ENCODE measurements at regions of chr19 and their contacts with region 1.

Region 1: DNA sequence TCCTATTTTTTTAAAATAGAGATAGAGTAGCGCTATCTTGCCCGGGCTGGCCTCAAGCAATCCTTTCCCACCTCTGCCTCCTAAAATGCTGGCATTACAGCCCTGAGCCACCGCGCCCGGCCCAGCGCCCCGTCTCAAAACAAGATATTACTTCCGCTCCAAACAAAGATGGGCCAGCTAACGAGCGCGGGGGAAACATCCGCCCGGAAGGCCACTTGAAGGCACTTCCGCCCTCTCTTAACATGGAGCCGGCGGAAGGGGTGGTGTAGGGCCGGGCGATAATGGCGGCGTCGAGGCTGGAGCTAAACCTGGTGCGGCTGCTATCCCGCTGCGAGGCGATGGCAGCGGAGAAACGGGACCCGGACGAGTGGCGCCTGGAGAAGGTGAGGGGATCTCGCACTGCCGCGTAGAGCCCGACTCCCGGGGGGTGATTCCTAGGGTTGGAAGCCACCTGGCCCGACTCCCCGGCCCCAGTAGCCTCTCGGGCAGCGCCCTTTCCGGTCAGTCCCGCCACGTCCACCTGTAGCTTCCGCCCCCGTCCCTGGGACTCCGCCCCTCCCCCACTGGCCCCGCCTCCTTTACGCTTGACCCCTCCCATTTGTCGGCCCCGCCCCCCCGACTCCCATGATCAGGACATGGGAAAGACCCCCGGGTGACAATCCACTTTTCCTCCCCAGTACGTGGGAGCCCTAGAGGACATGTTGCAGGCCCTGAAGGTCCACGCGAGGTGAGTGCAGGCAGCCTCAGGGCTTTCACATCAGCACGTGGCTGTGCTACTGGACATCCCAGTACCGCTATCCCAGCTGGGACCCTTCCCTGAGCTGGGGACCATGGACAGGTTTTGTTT is at the start of gene USE1:
- DNase-seq: peak; percentile 93
- ATAC-seq: peak; percentile 93
- H3K4me3 ChIP-seq: peak within 1 kb of the TSS; percentile 41 to 94 (median 80)
- H3K4me3 Mint-ChIP-seq: peak within 1 kb of the TSS; percentile 92
- H3K27ac ChIP-seq: peak within 1 kb of the TSS; percentile 91
- H3K27ac Mint-ChIP-seq: peak within 1 kb of the TSS; percentile 97
- H3K4me1 ChIP-seq: peaks cover 10 to 24% of the 10 kb centered on the region in 2 donors
- H3K4me1 Mint-ChIP-seq: peaks cover 19% of the 10 kb centered on the region
- H3K27me3 ChIP-seq: no peaks in the 10 kb centered on the region
- H3K27me3 Mint-ChIP-seq: no peaks in the 10 kb centered on the region
- CTCF ChIP-seq: no peak
- total RNA-seq, gene USE1: 39.9 and 49.5 TPM in 2 replicates

Region 2: GRCh38 chr19:17197666-17198065 is 17.7 kb before region 1 on chr19:
- CTCF ChIA-PET with region 1: no interaction called
- POLR2A ChIA-PET with region 1: no interaction called
- intact Hi-C with region 1: no loop called
- DNase-seq: no peak
- ATAC-seq: no peak
- H3K4me3 ChIP-seq: no peak overlapping the region
- H3K4me3 Mint-ChIP-seq: no peak overlapping the region
- H3K27ac ChIP-seq: no peak overlapping the region
- H3K27ac Mint-ChIP-seq: no peak overlapping the region
- H3K4me1 ChIP-seq: no peaks in the 10 kb centered on the region
- H3K4me1 Mint-ChIP-seq: no peaks in the 10 kb centered on the region
- H3K27me3 ChIP-seq: no peaks in the 10 kb centered on the region
- H3K27me3 Mint-ChIP-seq: no peaks in the 10 kb centered on the region
- CTCF ChIP-seq: no peak

Region 3: DNA sequence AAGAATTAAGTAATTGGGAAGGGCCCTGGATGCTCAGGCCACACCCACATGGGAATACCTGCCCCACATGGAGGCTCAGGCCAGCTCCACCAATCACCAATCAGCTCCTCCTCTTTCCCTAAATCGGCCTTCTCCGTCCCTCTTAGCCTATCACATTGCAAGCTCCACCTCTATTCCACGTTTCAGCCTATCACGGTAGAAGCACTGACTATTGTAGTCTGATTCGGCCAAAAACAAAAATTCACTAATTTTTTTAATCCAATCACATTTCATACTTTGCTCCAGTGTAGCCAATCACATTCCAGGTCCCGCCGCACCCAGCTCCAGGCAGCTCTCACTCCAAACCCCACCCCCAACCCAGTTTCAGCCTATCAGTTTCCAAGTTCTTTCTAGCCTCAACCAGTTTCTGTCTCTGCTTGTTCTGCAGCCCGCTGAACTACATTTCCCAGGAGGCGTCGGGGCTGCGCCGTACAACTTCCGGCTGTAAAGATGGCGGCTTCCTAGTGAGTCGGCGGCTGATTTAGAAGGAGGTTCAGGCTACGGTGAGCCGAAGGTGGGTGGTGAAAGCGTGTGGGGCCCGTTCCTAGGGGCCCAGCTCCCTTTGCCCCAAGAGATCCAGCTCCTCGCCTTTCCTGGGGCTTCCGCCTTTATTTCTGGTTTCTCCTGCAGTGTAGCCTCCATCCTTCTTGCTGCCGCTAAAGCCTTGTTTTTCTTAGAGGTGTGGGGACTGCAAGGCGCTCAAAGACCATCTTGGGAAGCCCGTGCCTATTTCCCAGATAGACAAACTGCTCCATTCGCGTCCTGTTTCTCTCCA is 51.8 kb after region 1 on chr19 and contains the start of gene BABAM1:
- CTCF ChIA-PET with region 1: interaction called, 3 read pairs
- POLR2A ChIA-PET with region 1: interaction called, 8 read pairs
- intact Hi-C with region 1: loop called (anchors 1 kb)
- DNase-seq: peak; percentile 98
- ATAC-seq: peak; percentile 89
- H3K4me3 ChIP-seq: peak within 1 kb of the TSS; percentile 76 to 95 (median 87)
- H3K4me3 Mint-ChIP-seq: peak within 1 kb of the TSS; percentile 84
- H3K27ac ChIP-seq: peak within 1 kb of the TSS; percentile 56 to 67
- H3K27ac Mint-ChIP-seq: peak within 1 kb of the TSS; percentile 86
- H3K4me1 ChIP-seq: peaks cover 6 to 24% of the 10 kb centered on the region in 2 donors
- H3K4me1 Mint-ChIP-seq: peaks cover 18% of the 10 kb centered on the region
- H3K27me3 ChIP-seq: no peaks in the 10 kb centered on the region
- H3K27me3 Mint-ChIP-seq: no peaks in the 10 kb centered on the region
- CTCF ChIP-seq: no peak
- total RNA-seq, gene BABAM1: 126 and 129 TPM in 2 replicates